ENCODE measurements at regions of chr1 and their contacts with region 1.

Region 1: DNA sequence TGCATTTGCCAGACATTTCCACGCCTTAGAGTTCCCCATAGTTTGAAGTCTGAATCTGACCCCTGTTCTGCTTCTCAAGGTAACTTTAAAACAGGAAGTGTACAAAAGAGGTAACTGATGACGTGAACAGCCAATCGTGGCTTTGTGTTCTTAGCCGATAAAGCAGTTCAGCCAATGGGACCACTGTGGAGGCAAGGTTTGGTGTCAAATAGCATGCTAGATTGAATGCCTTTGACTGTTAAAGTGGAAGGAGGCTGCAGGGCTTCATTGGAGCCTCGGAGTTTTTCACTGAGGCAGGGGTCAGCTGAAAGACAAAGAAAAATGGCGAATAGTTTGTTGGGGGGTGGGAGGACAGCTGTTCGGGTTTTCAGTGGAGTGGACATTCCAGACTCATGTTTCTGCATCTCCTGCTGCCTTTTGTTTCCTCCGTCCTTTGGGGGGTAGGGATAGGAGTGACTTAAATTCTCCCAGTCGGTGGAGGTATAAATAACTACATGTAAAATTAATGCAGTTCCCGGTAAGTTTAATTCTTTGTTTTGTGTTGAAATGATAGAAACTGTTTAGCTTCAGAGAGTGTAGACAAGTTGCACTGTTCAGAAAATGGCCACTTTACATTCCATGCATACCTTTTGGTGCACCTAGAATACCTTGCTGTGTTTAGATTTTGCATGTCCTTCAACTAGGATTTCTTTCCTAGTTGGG is 17.7 kb downstream of the NFYC start:
- DNase-seq: peak; percentile 60 to 93
- ATAC-seq: peak; percentile 91 to 96 (median 94)
- H3K4me3 ChIP-seq: peak overlapping the region; percentile 62
- H3K4me3 Mint-ChIP-seq: peak overlapping the region; percentile 99
- H3K27ac ChIP-seq: peak overlapping the region; percentile 76
- H3K27ac Mint-ChIP-seq: peak overlapping the region; percentile 97
- H3K4me1 ChIP-seq: peaks cover 18% of the 10 kb centered on the region
- H3K4me1 Mint-ChIP-seq: peaks cover 54 to 62% of the 10 kb centered on the region in 2 donors
- H3K27me3 ChIP-seq: no peaks in the 10 kb centered on the region
- H3K27me3 Mint-ChIP-seq: no peaks in the 10 kb centered on the region
- CTCF ChIP-seq: no peak

Region 2: DNA sequence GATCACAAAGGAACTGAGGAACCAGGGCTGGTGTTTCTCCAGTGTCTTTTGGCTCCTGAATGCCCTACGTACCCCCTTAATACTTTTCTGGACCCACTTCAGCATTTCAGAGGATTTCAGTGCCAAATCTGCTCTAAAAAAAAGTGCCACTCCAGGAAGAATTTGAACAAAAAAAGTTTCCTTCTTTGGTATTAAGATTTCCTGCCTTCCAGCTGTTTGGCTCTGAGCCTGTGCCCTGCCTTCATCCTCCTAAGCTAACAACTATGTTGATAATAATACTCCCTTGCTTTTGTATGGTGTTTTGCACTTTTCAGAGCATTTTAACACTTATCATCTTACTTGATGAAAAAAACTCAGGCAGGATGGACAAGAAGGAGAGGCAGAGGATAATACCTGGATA is 32.8 kb before region 1 on chr1:
- intact Hi-C with region 1: no loop called
- DNase-seq: no peak
- ATAC-seq: no peak
- H3K4me3 ChIP-seq: no peak overlapping the region
- H3K4me3 Mint-ChIP-seq: no peak overlapping the region
- H3K27ac ChIP-seq: no peak overlapping the region
- H3K27ac Mint-ChIP-seq: no peak overlapping the region
- H3K4me1 ChIP-seq: no peaks in the 10 kb centered on the region
- H3K4me1 Mint-ChIP-seq: no peaks in the 10 kb centered on the region
- H3K27me3 ChIP-seq: no peaks in the 10 kb centered on the region
- H3K27me3 Mint-ChIP-seq: peaks cover 5 to 9% of the 10 kb centered on the region in 2 donors
- CTCF ChIP-seq: no peak

Region 3: DNA sequence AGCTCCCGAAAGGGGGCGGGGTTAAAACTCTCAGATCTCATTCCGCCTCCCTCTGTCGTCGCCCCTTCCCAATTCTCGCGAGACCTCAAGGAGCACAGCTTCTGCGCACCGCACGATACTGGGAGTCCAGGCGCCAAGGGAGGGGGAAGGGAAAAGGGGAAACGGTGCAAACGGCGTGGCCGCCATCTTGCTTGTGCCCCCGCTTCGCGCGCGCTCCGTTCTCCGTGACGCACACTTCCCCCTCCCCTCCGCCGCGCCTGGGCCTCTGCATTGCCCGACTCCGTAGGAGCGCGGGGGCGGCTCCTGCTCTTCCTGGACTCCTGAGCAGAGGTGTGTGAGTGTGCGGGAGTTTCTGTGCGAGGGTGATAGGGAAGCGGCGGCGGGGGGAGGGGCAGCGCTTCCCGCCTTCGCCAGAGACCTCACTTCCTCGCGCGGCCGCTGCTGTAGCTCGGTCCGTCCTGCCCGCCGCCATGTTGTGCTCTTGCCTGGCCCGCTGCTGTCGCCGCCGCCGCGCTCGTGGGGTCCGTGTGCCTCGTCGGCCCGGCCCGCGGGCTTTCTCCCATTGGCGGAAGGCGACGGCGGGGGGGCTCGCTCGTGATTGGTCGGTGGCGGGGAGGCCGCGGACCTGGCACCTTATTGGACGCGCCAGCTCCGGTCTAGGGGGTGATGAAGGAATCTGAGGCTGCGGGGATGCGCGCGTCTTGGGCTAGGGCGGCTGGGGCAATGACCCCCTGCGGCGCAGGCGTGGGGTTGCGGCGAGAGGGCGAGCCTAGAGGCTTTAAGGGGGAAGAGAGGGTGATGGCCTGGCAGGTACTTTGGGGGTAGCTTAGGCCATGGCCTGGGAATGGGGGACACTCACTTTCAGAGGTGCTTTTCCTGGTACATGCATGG is 17.5 kb before region 1 on chr1 and contains the start of gene NFYC:
- intact Hi-C with region 1: loop called (anchors 1 kb)
- DNase-seq: peak; percentile 92 to 99
- ATAC-seq: peak; percentile 75 to 91 (median 83)
- H3K4me3 ChIP-seq: peak within 1 kb of the TSS; percentile 98
- H3K4me3 Mint-ChIP-seq: peak within 1 kb of the TSS; percentile 99
- H3K27ac ChIP-seq: peak within 1 kb of the TSS; percentile 99
- H3K27ac Mint-ChIP-seq: peak within 1 kb of the TSS; percentile 96 to 98
- H3K4me1 ChIP-seq: peaks cover 20% of the 10 kb centered on the region
- H3K4me1 Mint-ChIP-seq: peaks cover 59% of the 10 kb centered on the region in 2 donors
- H3K27me3 ChIP-seq: no peaks in the 10 kb centered on the region
- H3K27me3 Mint-ChIP-seq: no peaks in the 10 kb centered on the region
- CTCF ChIP-seq: no peak
- total RNA-seq, gene NFYC: 38.7 to 60.4 (median 48.5) TPM

Region 4: GRCh38 chr1:40774266-40774998 is 65.2 kb after region 1 on chr1:
- intact Hi-C with region 1: no loop called
- DNase-seq: peak; percentile 51 to 84
- ATAC-seq: peak; percentile 49 to 77 (median 66)
- H3K4me3 ChIP-seq: no peak overlapping the region
- H3K4me3 Mint-ChIP-seq: no peak overlapping the region
- H3K27ac ChIP-seq: no peak overlapping the region
- H3K27ac Mint-ChIP-seq: peak overlapping the region in 1 of 2 donors; percentile 10
- H3K4me1 ChIP-seq: no peaks in the 10 kb centered on the region
- H3K4me1 Mint-ChIP-seq: peaks cover 0 to 29% of the 10 kb centered on the region in 2 donors
- H3K27me3 ChIP-seq: no peaks in the 10 kb centered on the region
- H3K27me3 Mint-ChIP-seq: no peaks in the 10 kb centered on the region
- CTCF ChIP-seq: peak; percentile 72

Measured in natural killer cell (primary cell).